Natural killer cell (primary cell): ENCODE measurements at regions of chr12 and their contacts with region 1.

Region 1: DNA sequence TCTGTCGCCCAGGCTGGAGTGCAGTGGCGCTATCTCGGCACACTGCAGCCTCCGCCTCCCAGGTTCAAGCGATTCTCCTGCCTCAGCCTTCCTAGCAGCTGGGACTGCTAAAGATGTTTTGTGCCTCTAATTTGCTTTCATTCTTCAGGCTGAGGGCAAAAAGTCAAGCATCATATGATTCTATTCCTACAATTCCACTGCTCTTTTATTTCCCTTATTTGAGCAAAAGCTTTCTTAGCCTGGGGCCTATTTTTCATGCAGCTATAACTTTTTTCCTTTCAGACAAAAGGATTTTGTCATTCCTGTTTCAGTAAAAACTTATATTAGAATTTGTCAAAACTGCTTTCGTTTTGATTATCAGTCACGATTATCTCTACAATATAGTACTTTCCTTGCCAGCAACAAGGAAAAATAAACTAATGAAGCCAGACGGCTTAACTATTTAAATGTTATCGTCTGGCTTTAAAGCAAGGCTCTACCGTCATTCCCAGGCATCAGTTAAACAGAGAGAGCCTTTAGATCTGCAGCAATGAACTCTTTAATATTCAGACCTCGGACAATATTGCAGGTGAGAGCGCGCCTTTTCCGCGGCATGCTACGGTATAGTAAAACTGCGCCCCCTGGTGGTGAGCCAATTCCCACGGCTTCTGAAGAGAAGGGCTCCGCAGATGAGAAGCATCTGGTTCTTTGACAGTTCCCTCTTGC is 1.4 kb upstream of the SLC2A13 start:
- DNase-seq: peak; percentile 83 to 93
- ATAC-seq: peak; percentile 38 to 72 (median 41)
- H3K4me3 ChIP-seq: peak overlapping the region; percentile 50
- H3K4me3 Mint-ChIP-seq: peak overlapping the region; percentile 97
- H3K27ac ChIP-seq: peak overlapping the region; percentile 35
- H3K27ac Mint-ChIP-seq: peak overlapping the region; percentile 79 to 83
- H3K4me1 ChIP-seq: peaks cover 17% of the 10 kb centered on the region
- H3K4me1 Mint-ChIP-seq: peaks cover 34 to 36% of the 10 kb centered on the region in 2 donors
- H3K27me3 ChIP-seq: no peaks in the 10 kb centered on the region
- H3K27me3 Mint-ChIP-seq: peaks cover 7 to 17% of the 10 kb centered on the region in 2 donors
- CTCF ChIP-seq: peak; percentile 96

Region 2: DNA sequence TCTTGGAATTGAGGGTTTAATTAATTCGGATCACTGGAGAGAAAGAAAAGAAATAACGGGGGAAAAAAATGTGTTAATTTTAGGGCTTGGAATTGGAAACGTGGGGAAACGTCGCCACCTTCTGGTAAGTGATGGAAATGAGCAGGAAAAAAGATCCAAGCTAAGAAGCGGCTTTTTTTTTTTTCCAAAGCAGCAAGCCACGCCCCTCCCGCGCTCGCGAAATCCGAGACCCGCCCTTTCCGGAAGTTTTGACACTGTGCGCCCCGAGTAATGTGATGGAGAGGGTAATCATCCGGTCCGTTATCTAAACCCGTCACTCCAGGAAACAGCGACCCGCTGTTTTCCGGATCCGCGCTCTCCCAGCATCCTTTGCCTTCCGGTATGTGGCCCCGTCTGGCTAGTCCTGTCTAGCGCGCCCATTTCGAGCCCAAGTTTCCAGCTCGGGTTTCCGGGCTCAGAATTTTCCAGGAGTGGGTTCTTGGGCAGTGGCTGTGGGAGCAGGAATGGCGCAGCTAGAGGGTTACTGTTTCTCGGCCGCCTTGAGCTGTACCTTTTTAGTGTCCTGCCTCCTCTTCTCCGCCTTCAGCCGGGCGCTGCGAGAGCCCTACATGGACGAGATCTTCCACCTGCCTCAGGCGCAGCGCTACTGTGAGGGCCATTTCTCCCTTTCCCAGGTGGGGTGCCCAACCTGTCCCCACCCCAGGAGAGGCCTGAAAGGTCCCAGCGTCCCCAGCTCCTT is 1790.7 kb before region 1 on chr12 and contains the start of gene ALG10B:
- intact Hi-C with region 1: loop called (anchors 5 kb)
- DNase-seq: peak; percentile 88 to 98
- ATAC-seq: peak; percentile 96 to 98 (median 98)
- H3K4me3 ChIP-seq: peak within 1 kb of the TSS; percentile 94
- H3K4me3 Mint-ChIP-seq: peak within 1 kb of the TSS; percentile 93
- H3K27ac ChIP-seq: peak within 1 kb of the TSS; percentile 95
- H3K27ac Mint-ChIP-seq: peak within 1 kb of the TSS; percentile 94 to 95
- H3K4me1 ChIP-seq: peaks cover 7% of the 10 kb centered on the region
- H3K4me1 Mint-ChIP-seq: peaks cover 22 to 26% of the 10 kb centered on the region in 2 donors
- H3K27me3 ChIP-seq: no peaks in the 10 kb centered on the region
- H3K27me3 Mint-ChIP-seq: no peaks in the 10 kb centered on the region
- CTCF ChIP-seq: peak; percentile 59
- total RNA-seq, gene ALG10B: 7.5 to 11.6 (median 8.0) TPM

Region 3: GRCh38 chr12:39319187-39319586 is 788.1 kb before region 1 on chr12:
- intact Hi-C with region 1: loop called (anchors 1 kb)
- DNase-seq: no peak
- ATAC-seq: no peak
- H3K4me3 ChIP-seq: no peak overlapping the region
- H3K4me3 Mint-ChIP-seq: no peak overlapping the region
- H3K27ac ChIP-seq: no peak overlapping the region
- H3K27ac Mint-ChIP-seq: no peak overlapping the region
- H3K4me1 ChIP-seq: no peaks in the 10 kb centered on the region
- H3K4me1 Mint-ChIP-seq: peaks cover 0 to 5% of the 10 kb centered on the region in 2 donors
- H3K27me3 ChIP-seq: no peaks in the 10 kb centered on the region
- H3K27me3 Mint-ChIP-seq: no peaks in the 10 kb centered on the region
- CTCF ChIP-seq: no peak

Region 4: DNA sequence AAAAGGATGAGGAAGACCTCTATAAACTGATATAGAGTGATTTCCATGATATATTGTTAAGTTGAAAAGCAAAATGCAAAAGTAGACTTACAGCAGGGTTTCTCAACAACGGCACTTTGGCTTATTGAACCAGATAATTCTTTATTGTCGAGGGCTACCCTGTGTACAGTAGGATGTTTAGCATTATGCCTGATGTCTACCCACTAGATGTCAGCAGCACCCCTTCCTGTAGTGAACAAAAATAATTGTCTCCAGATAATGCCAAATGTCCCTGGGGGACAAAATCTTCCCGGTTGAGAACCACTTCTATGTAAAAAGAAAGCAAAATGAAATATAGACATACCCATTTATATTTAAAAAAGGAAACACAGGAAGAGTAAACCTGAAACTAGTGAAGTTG is 520.0 kb before region 1 on chr12:
- intact Hi-C with region 1: loop called (anchors 1 kb)
- DNase-seq: peak in 1 of 2 donors; percentile 68
- ATAC-seq: peak in 2 of 3 donors; percentile 50 to 60
- H3K4me3 ChIP-seq: no peak overlapping the region
- H3K4me3 Mint-ChIP-seq: no peak overlapping the region
- H3K27ac ChIP-seq: no peak overlapping the region
- H3K27ac Mint-ChIP-seq: no peak overlapping the region
- H3K4me1 ChIP-seq: no peaks in the 10 kb centered on the region
- H3K4me1 Mint-ChIP-seq: no peaks in the 10 kb centered on the region
- H3K27me3 ChIP-seq: no peaks in the 10 kb centered on the region
- H3K27me3 Mint-ChIP-seq: peaks cover 0 to 4% of the 10 kb centered on the region in 2 donors
- CTCF ChIP-seq: peak; percentile 20

Region 5: GRCh38 chr12:39764944-39765560 is 342.2 kb before region 1 on chr12:
- intact Hi-C with region 1: loop called (anchors 1 kb)
- DNase-seq: peak in 1 of 2 donors; percentile 44
- ATAC-seq: peak in 1 of 3 donors; percentile 66
- H3K4me3 ChIP-seq: no peak overlapping the region
- H3K4me3 Mint-ChIP-seq: no peak overlapping the region
- H3K27ac ChIP-seq: no peak overlapping the region
- H3K27ac Mint-ChIP-seq: no peak overlapping the region
- H3K4me1 ChIP-seq: no peaks in the 10 kb centered on the region
- H3K4me1 Mint-ChIP-seq: no peaks in the 10 kb centered on the region
- H3K27me3 ChIP-seq: no peaks in the 10 kb centered on the region
- H3K27me3 Mint-ChIP-seq: no peaks in the 10 kb centered on the region
- CTCF ChIP-seq: peak; percentile 47

Region 6: DNA sequence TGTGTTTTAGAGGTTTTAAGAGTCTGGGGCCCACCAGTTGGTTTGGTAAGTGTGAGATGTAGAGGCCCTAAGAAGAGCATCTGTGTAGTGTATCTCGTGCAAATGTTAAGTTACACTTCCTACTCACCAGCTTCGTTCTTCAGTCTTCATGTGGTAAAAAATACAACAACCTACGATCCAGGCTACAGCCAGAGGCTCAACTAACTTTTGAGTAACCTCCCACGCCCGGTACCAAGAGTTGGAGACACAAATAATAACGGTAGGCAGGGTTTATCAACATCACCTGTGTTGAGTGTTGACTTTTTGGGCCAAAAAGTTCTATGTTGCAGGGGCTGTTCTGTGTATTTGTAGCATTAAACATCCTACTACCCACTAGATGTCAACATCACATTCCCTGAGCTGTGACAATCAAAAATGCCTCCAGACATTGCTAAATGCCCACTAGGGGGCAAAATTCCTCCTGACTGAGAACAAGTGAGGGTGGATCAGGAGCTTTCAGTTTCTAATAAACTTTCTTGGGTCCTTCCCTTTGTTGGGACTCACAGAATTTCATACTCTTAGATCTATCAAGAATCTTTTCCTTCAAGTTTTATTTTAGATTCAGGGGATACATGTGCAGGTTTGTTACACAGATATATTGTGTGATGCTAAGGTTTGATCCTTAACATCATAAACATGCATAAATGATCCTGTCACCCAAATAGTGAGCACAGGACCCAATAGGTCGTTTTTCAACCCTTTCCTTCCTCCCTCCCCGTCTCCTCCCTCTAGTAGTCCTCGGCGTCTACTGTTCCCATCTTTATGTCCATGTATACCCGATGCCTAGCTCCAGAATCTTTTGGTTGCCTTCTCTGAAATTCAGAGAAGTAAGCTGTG is 96.1 kb before region 1 on chr12:
- intact Hi-C with region 1: loop called (anchors 1 kb)
- DNase-seq: peak; percentile 25 to 84
- ATAC-seq: peak; percentile 89 to 98 (median 97)
- H3K4me3 ChIP-seq: peak overlapping the region; percentile 15
- H3K4me3 Mint-ChIP-seq: peak overlapping the region; percentile 74
- H3K27ac ChIP-seq: no peak overlapping the region
- H3K27ac Mint-ChIP-seq: peak overlapping the region; percentile 26 to 83
- H3K4me1 ChIP-seq: peaks cover 5% of the 10 kb centered on the region
- H3K4me1 Mint-ChIP-seq: peaks cover 10 to 16% of the 10 kb centered on the region in 2 donors
- H3K27me3 ChIP-seq: no peaks in the 10 kb centered on the region
- H3K27me3 Mint-ChIP-seq: no peaks in the 10 kb centered on the region
- CTCF ChIP-seq: peak; percentile 80